ENCODE measurements at regions of chr15 and their contacts with region 1.

Region 1: GRCh38 chr15:70259028-70259424 is 161.3 kb upstream of the TLE3 start:
- DNase-seq: peak; percentile 58
- ATAC-seq: peak; percentile 6
- H3K4me3 Mint-ChIP-seq: peak overlapping the region; percentile 22
- H3K27ac Mint-ChIP-seq: peak overlapping the region; percentile 75
- H3K4me1 Mint-ChIP-seq: peaks cover 53% of the 10 kb centered on the region
- H3K27me3 Mint-ChIP-seq: peaks cover 6% of the 10 kb centered on the region
- CTCF ChIP-seq: no peak

Region 2: DNA sequence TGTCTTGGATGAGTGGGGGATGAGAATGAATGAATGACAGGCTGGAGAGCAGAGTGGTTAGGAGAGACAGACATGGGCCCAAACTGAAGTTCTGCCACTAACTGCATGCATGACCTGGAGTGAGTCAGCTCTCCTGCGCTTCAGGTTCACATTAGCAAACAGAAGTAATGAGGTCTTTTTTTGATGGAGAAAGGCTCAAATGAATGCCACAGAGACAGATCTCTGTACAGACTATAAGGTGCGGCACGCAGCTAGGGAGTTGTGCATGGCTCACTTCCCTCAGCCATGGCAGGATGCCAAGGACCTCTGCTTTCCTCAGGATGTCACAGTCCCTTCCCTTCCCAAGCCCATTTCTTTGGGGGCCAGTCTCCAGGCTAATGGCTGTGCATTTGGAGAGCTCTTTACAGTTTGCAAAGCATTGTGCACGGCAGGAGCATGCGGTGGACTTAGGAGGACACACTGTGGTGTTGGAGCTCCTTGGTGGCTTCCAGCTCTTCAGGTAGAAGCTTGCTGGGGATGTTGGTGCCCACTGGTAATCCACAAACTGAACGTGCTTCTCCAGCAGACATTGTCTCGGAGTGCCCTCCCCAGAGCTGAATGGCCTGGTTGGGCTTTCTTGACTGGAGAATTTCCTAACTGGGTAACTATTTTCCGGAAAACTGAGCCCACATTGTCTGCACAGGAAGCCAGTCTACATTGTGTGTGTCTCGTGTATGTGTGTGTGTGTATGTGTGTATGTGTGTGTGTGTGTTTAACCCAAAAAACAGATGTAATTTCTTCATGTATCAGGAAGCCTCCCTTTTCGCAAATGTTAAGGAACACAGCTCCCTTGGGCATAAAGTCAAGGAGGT is 11.1 kb after region 1 on chr15:
- CTCF ChIA-PET with region 1: interaction called, 10 read pairs
- POLR2A ChIA-PET with region 1: interaction called, 8 read pairs
- intact Hi-C with region 1: no loop called
- DNase-seq: no peak
- ATAC-seq: no peak
- H3K4me3 Mint-ChIP-seq: no peak overlapping the region
- H3K27ac Mint-ChIP-seq: no peak overlapping the region
- H3K4me1 Mint-ChIP-seq: peaks cover 40% of the 10 kb centered on the region
- H3K27me3 Mint-ChIP-seq: peaks cover 17% of the 10 kb centered on the region
- CTCF ChIP-seq: no peak